Naive thymus-derived CD4-positive, alpha-beta T cell (primary cell): ENCODE measurements at regions of chr20 and their contacts with region 1.

Region 1: GRCh38 chr20:62740286-62741141 is 31.9 kb downstream of the NTSR1 start:
- DNase-seq: peak; percentile 44 to 78 (median 68)
- ATAC-seq: peak; percentile 87
- H3K4me3 ChIP-seq: peak overlapping the region; percentile 70
- H3K4me3 Mint-ChIP-seq: peak overlapping the region; percentile 70 to 91 (median 82)
- H3K27ac ChIP-seq: peak overlapping the region; percentile 60
- H3K27ac Mint-ChIP-seq: peak overlapping the region; percentile 75 to 97 (median 86)
- H3K4me1 ChIP-seq: peaks cover 38 to 50% of the 10 kb centered on the region in 2 donors
- H3K4me1 Mint-ChIP-seq: peaks cover 16 to 43% (median 29%) of the 10 kb centered on the region in 7 donors
- H3K27me3 ChIP-seq: no peaks in the 10 kb centered on the region
- H3K27me3 Mint-ChIP-seq: peaks cover 0 to 21% (median 0%) of the 10 kb centered on the region in 5 donors

Region 2: DNA sequence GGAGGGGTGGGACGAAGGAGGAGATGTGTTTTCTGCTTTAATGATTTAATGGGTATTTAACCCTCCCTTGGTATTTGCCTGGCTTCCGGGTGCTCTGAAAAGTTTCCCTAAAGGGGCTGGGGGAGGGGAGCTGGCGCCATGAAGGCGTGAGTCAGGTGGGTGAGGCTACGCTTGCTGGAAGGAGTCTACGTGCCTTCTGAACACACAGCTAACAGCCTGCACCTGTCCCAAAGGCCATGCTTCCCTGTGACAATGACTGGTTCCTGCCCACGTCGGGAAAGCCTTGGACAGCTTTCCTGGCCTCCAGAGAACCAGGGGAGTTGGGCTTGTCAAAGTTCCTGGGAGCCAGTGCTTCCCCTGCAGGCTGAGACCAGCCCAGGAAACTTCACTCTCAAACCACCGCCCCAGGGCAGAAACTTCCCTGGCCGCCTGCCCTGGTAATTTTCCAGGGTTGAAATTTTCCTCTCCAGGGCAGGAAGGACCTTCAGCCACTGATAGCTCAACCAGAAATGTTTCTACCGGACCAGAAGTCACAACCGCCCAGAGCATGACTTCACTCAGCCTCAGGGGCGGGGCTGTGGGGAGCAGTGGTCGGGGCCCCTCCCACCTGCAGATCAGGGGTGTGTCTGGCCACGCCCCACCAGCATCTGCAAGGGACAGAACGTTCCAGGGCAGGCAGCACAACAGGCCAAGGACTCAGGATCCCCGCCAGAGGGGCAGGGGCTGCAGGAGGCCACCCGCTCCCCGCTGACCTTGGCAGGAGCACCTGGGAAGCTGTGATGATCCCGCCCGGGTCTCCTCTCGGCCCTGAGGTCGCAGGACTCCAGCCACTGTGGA is 116.8 kb before region 1 on chr20:
- CTCF ChIA-PET with region 1: no interaction called
- POLR2A ChIA-PET with region 1: no interaction called
- intact Hi-C with region 1: loop called in 1 of 2 experiments (anchors 1 kb)
- DNase-seq: peak; percentile 31 to 85 (median 58)
- ATAC-seq: peak; percentile 96
- H3K4me3 ChIP-seq: peak overlapping the region; percentile 39
- H3K4me3 Mint-ChIP-seq: peak overlapping the region; percentile 41 to 85 (median 75)
- H3K27ac ChIP-seq: no peak overlapping the region
- H3K27ac Mint-ChIP-seq: peak overlapping the region; percentile 28 to 98 (median 72)
- H3K4me1 ChIP-seq: peaks cover 12 to 21% of the 10 kb centered on the region in 2 donors
- H3K4me1 Mint-ChIP-seq: peaks cover 11 to 38% (median 13%) of the 10 kb centered on the region in 7 donors
- H3K27me3 ChIP-seq: no peaks in the 10 kb centered on the region
- H3K27me3 Mint-ChIP-seq: no peaks in the 10 kb centered on the region

Region 3: DNA sequence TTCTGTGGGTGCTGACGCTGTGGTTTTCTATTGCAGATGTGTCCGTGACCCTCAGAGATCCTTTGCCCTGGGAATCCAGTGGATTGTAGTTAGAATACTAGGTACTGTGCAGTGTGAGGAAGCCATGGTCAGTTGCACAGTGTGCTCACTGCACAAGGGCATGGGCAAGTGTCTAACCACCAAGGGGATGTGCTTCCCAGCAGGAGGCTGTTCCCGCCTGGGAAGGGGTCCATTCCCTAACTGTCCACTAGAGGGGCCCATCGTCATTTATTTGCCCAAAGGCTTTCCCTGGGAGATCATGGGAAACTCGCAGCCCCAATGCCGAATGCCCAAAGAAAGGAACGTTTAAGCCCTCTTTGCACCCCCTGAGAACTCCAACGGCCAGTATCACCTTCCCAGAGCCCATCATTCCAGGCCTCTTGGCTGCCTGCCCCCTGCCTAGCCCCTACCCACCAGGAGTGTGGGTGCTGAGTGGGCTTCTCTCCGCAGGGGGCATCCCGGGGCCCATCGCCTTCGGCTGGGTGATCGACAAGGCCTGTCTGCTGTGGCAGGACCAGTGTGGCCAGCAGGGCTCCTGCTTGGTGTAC is 72.0 kb before region 1 on chr20:
- CTCF ChIA-PET with region 1: no interaction called
- POLR2A ChIA-PET with region 1: interaction called, 3 read pairs
- intact Hi-C with region 1: loop called in 1 of 2 experiments (anchors 1 kb)
- DNase-seq: peak in 5 of 9 donors; percentile 10 to 32 (median 23)
- ATAC-seq: peak; percentile 59
- H3K4me3 ChIP-seq: no peak overlapping the region
- H3K4me3 Mint-ChIP-seq: no peak overlapping the region
- H3K27ac ChIP-seq: no peak overlapping the region
- H3K27ac Mint-ChIP-seq: peak overlapping the region in 1 of 9 donors; percentile 62
- H3K4me1 ChIP-seq: no peaks in the 10 kb centered on the region
- H3K4me1 Mint-ChIP-seq: peaks cover 0 to 2% (median 0%) of the 10 kb centered on the region in 7 donors
- H3K27me3 ChIP-seq: no peaks in the 10 kb centered on the region
- H3K27me3 Mint-ChIP-seq: no peaks in the 10 kb centered on the region

Region 4: DNA sequence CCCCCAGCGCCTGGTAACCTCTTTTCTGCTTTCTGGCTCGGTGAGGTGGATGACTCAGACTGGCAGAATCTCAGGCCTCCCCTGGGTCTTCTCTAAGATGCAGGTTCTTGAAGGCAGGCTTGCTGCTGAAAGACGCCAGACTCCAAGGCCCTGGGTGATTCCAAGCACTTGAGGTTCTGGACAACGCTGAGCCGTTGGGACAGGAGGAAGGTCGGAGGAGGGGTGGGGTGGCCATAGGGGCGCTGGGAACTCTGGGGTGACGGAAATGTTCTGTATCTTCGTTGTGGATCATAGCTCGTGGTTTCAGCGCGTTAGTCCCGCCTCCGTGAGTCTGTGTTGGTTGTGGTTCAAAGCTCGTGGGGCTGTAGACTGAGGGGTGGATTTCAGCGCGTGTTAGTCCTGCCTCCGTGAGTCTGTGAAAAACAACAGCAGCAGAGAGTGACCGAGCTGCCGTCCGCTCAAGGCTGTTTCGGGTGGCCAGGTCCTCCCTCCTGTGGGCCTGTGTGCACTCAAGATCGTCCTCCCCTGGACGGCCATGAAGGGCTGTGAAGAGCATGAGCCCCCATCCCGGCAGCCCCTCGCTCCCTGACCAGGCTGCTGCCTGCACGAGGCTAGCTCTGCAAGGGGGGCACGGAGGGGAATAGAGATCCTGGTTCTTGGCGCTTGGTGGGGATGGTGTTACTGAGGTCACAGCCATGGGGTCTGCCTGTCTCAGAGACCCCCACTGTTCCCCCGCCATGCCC is 24.1 kb before region 1 on chr20:
- CTCF ChIA-PET with region 1: interaction called, 3 read pairs
- POLR2A ChIA-PET with region 1: interaction called, 4 read pairs
- intact Hi-C with region 1: loop called (anchors 1 to 2 kb)
- DNase-seq: peak in 7 of 9 donors; percentile 33 to 62 (median 49)
- ATAC-seq: peak; percentile 82
- H3K4me3 ChIP-seq: no peak overlapping the region
- H3K4me3 Mint-ChIP-seq: peak overlapping the region; percentile 25 to 81 (median 71)
- H3K27ac ChIP-seq: peak overlapping the region; percentile 4
- H3K27ac Mint-ChIP-seq: peak overlapping the region; percentile 60 to 94 (median 84)
- H3K4me1 ChIP-seq: peaks cover 13 to 16% of the 10 kb centered on the region in 2 donors
- H3K4me1 Mint-ChIP-seq: peaks cover 12 to 31% (median 22%) of the 10 kb centered on the region in 7 donors
- H3K27me3 ChIP-seq: no peaks in the 10 kb centered on the region
- H3K27me3 Mint-ChIP-seq: peaks cover 0 to 62% (median 0%) of the 10 kb centered on the region in 5 donors

Region 5: DNA sequence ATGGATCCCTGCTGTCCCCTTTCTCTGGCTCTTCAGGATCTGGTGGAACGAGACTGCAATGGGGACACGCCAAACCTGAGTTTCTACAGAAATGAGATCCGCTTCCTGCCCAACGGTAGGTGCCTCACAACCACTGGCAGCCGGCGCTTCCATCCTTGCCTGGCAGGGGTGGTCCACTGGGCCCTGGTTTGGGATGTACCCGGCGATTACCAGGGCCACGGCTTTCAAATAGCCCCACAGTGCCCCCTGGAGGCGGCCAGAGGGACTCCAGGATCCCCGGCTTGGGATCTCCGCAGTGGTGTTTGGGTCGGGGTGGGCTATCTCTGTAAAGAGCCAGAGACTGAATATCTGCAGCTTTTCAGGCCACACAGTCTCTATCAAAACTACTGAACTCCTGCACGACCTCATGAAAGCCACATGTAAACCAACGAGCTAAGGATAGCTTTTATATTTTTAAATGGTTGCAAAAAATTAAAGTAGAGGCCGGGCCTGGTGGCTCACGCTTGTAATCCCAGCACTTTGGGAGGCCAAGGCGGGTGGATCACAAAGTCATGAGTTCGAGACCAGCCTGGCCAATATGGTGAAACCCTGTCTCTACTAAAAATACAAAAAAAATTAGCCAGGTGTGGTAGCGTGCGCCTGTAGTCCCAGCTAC is 67.8 kb after region 1 on chr20:
- CTCF ChIA-PET with region 1: no interaction called
- POLR2A ChIA-PET with region 1: interaction called, 7 read pairs
- intact Hi-C with region 1: loop called in 1 of 2 experiments (anchors 2 kb)
- DNase-seq: peak; percentile 58 to 84 (median 71)
- ATAC-seq: peak; percentile 70
- H3K4me3 ChIP-seq: no peak overlapping the region
- H3K4me3 Mint-ChIP-seq: peak overlapping the region in 9 of 10 donors; percentile 18 to 82 (median 57)
- H3K27ac ChIP-seq: peak overlapping the region; percentile 22
- H3K27ac Mint-ChIP-seq: peak overlapping the region in 7 of 9 donors; percentile 13 to 88 (median 65)
- H3K4me1 ChIP-seq: peaks cover 16 to 30% of the 10 kb centered on the region in 2 donors
- H3K4me1 Mint-ChIP-seq: peaks cover 16 to 33% (median 25%) of the 10 kb centered on the region in 7 donors
- H3K27me3 ChIP-seq: no peaks in the 10 kb centered on the region
- H3K27me3 Mint-ChIP-seq: no peaks in the 10 kb centered on the region